PC-3 (cell line): ENCODE measurements at regions of chr13 and their contacts with region 1.

Region 1: GRCh38 chr13:45119991-45120864 is at the start of gene GTF2F2:
- DNase-seq: peak; percentile 84
- ATAC-seq: peak; percentile 86
- H3K4me3 ChIP-seq: peak within 1 kb of the TSS; percentile 99
- H3K27ac ChIP-seq: peak within 1 kb of the TSS; percentile 83
- H3K4me1 ChIP-seq: peaks cover 13% of the 10 kb centered on the region
- H3K27me3 ChIP-seq: no peaks in the 10 kb centered on the region
- CTCF ChIP-seq: no peak
- total RNA-seq, gene GTF2F2: 24.8 and 28.3 TPM in 2 replicates

Region 2: DNA sequence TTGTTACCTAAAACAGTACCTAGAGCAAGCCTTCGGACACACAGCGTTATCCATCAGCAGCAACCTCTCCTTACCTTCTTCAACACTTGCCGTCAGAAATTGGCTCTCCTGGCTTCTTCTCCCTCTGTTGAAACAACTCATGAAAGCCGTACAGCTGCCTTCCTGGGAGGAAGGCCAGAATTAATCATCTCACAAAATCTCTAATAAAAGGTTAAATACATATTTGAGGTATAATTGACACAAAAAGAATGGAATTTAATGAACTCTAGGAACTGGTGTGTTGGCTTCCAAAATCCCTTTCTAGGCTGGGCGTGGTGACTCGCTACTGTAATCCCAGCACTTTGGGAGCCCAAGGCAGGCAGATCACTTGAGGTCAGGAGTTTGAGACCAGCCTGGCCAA is 37.3 kb before region 1 on chr13:
- CTCF ChIA-PET with region 1: no interaction called
- POLR2A ChIA-PET with region 1: no interaction called
- intact Hi-C with region 1: loop called (anchors 1 kb)
- DNase-seq: peak; percentile 92
- ATAC-seq: peak; percentile 89
- H3K4me3 ChIP-seq: peak overlapping the region; percentile 17; the same call in 1 of the 2 replicates
- H3K27ac ChIP-seq: peak overlapping the region; percentile 55
- H3K4me1 ChIP-seq: peaks cover 32% of the 10 kb centered on the region
- H3K27me3 ChIP-seq: no peaks in the 10 kb centered on the region
- CTCF ChIP-seq: no peak

Region 3: DNA sequence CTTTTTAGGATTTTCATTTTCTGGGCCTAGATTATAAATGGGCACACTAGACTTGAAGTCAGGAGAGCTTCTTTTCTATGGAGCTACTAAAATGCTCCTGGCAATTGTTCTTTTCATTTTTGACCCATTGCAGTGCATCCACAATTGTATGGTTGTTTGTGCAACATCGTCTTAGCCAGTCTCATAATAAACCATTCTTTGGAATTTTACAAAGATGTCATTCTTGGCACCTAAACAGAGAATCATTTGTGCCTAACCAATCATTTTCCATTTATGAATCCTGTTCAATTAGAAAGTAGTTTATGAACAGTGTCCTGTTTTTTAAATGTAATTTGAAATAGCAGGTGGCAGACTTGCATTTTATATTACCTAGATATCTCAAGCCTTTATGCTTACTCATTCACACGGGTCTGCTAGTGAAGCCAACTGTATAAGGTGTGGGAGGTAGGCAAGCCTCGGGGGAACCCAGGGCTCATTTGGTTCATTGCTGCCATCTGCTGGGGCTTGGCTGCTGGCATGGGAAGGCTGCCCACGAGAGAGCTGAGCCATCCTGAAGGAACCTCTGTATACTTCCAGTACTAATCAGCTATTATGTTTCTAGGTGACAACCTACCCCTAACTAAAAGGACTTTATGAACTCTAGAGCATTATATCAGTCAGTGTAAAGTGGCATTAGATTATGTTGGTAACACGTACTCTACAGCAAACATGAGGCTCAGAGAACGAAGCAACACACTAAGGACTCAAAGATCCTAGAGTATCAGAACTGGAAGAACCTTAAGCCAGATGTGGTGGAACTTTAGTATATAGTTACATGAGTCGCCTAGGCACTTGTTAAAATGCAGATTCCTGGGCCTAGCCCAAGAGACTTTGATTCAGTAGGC is 160.8 kb after region 1 on chr13:
- CTCF ChIA-PET with region 1: no interaction called
- POLR2A ChIA-PET with region 1: interaction called, 5 read pairs
- intact Hi-C with region 1: loop called (anchors 2 kb)
- DNase-seq: peak; percentile 83
- ATAC-seq: peak; percentile 99
- H3K4me3 ChIP-seq: no peak overlapping the region
- H3K27ac ChIP-seq: no peak overlapping the region
- H3K4me1 ChIP-seq: peaks cover 10% of the 10 kb centered on the region; the same call in 1 of the 2 replicates
- H3K27me3 ChIP-seq: no peaks in the 10 kb centered on the region
- CTCF ChIP-seq: peak; percentile 87